RWPE1 (cell line): ENCODE measurements at regions of chr11 and their contacts with region 1.

Region 1: GRCh38 chr11:18395735-18396504 is 1.6 kb downstream of the LDHA start:
- DNase-seq: peak; percentile 98
- H3K27ac ChIP-seq: peak overlapping the region; percentile 98
- CTCF ChIP-seq: no peak

Region 2: DNA sequence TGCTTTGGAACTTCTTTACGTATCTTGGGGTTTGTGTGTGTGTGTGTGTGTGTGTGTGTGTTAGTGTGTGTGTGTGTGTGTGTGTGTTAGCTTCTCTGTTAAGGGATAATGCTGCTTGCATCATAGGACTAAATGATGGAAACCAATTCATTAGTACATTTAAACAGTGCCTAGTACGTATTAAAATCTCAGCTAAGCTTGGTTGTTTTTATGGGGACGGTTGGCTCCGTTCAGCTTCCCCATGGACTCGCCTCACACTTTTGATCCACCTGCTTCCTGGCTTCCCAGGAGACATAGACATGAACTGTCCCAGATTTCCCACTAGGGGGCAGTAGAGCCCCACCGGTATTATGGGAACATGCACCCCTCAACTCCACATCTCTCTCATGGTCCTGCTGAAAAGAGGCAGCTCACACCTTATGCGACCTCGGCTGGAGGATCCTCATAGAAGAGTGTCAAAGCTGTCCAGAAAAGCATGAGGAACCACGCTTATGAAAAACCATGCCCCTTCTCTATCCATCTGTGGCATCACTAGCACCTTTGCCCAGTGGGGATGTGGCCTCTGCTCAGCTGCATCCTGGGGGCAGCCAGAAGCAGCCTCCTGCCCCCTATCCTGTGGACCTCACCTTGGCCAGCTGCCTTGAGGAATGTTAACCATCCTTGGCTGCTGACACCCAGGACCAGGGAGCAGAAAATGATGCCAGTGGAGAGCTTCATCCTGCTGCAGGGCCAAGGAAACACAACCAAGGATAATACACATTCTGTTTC is 280.4 kb before region 1 on chr11:
- CTCF ChIA-PET with region 1: no interaction called
- POLR2A ChIA-PET with region 1: no interaction called
- DNase-seq: peak; percentile 79
- H3K27ac ChIP-seq: no peak overlapping the region
- CTCF ChIP-seq: peak; percentile 85

Region 3: DNA sequence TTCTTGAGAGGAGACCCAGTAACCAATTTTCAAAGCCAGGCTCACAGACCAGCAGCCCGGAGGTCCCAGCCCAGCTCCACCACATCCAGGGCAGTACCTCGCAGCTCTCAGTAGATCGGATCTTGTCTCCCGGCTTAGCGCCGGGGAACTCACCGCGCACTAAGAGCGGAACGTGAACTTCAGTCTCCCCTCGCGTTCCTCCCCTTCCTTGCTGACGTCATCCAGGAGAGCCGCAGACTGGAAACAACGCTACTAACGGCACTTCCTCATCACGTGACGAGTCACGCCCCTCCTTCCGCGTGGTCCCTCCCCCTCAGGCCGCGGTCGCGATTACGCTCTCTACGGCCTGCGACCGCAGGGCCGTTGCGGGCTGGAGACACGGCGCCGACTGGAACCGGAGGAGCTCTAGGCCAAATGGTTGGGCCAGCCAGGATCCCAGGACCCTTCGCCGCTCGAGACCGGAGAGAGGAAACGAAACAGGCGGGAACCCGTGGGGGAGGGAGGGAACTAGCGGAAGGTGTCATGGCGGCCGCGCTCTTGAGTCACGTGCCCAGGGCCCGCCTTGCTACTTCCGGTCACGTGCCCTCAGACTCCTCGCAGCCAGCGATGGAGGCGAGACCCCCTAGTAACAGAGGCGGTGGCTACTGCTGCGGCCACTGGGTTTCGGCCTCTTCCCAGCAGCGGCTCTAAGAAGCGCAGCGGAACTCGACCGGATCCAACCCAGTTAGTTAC is 73.8 kb before region 1 on chr11 and contains the starts of genes GTF2H1 and HPS5:
- CTCF ChIA-PET with region 1: interaction called, 4 read pairs
- POLR2A ChIA-PET with region 1: interaction called, 12 read pairs
- DNase-seq: peak; percentile 99
- H3K27ac ChIP-seq: peak within 1 kb of the TSS; percentile 91
- CTCF ChIP-seq: no peak

Region 4: GRCh38 chr11:18332302-18332701 is 63.6 kb before region 1 on chr11:
- CTCF ChIA-PET with region 1: no interaction called
- POLR2A ChIA-PET with region 1: no interaction called
- DNase-seq: no peak
- H3K27ac ChIP-seq: no peak overlapping the region
- CTCF ChIP-seq: no peak

Region 5: GRCh38 chr11:18383388-18384156 is 12.3 kb before region 1 on chr11:
- CTCF ChIA-PET with region 1: interaction called, 5 read pairs
- POLR2A ChIA-PET with region 1: interaction called, 38 read pairs
- DNase-seq: peak; percentile 92
- H3K27ac ChIP-seq: peak overlapping the region; percentile 100
- CTCF ChIP-seq: no peak